Activated CD4-positive, alpha-beta T cell treated with anti-CD3 and anti-CD28 coated beads, Interleukin-2, amount 10 ng/mL, durations not matched to agents 24 days and 14 days (primary cell): ENCODE measurements at regions of chr1 and their contacts with region 1.

Region 1: DNA sequence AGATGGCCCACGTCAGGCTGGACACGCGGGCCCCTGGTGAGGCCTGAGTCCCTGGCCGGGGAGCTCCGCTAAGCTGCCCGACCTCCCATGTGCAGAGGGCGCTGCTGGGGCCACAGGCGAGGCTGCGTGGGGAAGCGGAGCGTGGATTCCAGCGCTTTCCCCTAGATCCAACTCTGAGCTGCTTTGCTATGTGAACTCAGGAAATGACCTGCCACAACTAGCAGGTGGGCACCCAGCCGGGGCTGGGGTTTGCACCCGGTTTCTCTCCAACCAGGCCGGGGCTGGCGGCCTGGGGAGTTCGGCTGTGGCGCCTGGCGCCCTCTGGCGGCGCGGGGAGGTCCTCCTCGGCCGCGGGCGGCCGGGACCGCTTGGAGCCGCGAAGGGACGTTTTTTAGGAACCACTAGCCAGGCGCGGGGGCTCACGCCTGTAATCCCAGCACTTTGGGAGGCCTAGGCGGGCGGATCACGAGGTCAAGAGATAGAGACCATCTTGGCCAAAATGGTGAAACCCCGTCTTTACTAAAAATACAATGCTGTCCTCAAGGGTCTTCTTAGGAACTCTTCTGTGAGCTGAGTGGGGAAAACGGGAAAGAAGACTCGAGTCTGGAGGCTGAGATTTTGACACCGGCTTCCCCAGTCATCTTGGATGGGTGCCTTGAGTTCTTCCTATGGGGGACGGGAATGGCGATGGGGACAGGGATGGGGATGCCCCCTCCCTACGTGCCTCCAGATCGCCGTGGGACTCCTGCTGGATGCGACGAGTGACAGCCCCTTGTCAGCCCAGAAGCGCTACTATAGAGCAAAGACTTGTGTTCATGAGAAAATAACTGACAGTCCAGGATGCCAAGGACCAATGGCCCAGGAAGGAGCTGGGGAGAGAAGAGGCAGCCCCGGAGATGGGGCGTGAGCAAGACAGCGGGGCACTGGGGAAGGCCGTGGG is 12.6 kb downstream of the PYCR2 start:
- DNase-seq: peak; percentile 93
- H3K4me3 Mint-ChIP-seq: no peak overlapping the region
- H3K27ac Mint-ChIP-seq: no peak overlapping the region
- H3K4me1 Mint-ChIP-seq: peaks cover 11% of the 10 kb centered on the region
- H3K27me3 Mint-ChIP-seq: peaks cover 8% of the 10 kb centered on the region

Region 2: DNA sequence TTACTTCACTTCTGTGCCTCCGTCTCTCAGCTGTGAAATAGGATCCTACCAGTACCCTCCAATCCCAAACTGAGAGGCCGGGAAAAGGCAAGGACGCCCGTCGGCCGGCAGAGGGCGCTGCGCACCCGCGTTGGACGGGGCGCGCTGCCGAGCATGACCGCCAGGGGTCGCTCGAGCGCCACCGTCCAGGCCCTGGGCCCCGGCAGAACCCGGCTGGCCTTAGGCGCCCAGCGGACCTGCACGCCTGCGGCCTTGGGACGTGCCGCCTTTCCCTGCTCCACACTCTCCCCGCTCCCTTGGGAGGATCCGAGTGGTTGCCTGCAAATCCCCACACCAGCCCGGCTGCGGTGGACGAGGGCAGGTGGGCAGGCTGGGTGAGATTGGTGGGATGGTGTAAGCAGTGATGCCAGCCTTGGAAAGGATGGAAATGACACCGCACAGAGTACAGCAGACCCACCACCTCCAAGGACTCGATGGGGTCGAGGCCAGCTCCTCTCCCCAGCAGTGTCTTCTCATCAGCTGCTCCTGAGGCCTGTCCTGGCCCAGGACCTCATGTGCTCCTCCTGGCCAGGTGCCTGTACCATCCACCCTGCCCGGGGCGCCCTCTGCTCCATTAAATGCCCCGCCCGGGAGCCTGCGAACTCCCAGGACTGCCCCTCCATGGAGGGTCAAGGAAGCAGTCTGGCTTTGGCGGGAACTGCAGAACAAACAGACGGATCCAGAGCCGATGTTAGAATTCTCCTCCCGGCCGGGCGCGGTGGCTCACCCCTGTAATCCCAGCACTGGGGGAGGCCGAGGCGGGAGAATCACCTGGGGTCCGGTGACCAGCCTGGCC is 436.3 kb before region 1 on chr1:
- intact Hi-C with region 1: loop called (anchors 1 kb)
- DNase-seq: peak; percentile 93
- H3K4me3 Mint-ChIP-seq: no peak overlapping the region
- H3K27ac Mint-ChIP-seq: no peak overlapping the region
- H3K4me1 Mint-ChIP-seq: peaks cover 38% of the 10 kb centered on the region
- H3K27me3 Mint-ChIP-seq: no peaks in the 10 kb centered on the region

Region 3: GRCh38 chr1:225554216-225554812 is 357.1 kb before region 1 on chr1:
- intact Hi-C with region 1: loop called (anchors 5 kb)
- DNase-seq: no peak
- H3K4me3 Mint-ChIP-seq: no peak overlapping the region
- H3K27ac Mint-ChIP-seq: no peak overlapping the region
- H3K4me1 Mint-ChIP-seq: no peaks in the 10 kb centered on the region
- H3K27me3 Mint-ChIP-seq: peaks cover 12% of the 10 kb centered on the region

Region 4: DNA sequence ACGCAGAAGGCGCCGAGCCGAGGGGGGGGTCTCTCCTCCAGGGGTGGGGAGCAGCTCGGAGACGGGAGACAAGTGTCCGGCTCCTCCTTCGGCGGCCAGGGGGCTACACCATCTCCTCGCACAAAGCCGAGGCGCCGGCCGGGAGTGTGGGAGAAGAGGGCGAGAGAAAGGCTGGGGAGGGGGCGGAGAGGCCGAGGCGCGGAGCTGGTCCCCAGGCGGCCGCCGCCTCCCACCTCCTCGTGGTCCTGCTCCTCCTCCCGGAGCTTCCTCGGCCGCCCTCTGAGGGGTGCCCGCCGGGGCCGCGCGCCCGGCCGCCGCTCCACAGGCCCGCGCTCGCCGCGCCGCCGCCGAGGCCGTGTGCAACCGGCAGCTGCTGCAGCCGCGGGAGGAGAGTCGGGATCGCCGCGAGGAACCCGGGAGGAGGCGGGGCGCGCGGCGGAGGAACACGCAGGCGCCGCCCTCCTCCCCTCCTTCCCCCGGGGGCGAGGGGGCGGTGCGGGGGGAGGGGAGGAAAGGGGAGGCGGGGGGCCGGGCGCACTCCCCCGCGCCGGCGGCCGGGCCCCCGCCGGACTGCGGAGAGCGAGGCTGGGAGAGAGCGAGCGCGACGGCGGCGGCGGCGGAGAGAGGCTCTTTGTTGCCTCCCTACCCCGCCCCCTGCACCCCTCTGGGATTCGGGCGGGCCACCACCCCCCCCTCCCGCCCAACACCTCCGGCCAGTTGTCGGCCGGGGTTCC is 258.6 kb before region 1 on chr1 and contains the start of gene ENAH:
- intact Hi-C with region 1: loop called (anchors 10 kb)
- DNase-seq: peak; percentile 79
- H3K4me3 Mint-ChIP-seq: peak within 1 kb of the TSS; percentile 83
- H3K27ac Mint-ChIP-seq: no peak within 1 kb of the TSS
- H3K4me1 Mint-ChIP-seq: peaks cover 10% of the 10 kb centered on the region
- H3K27me3 Mint-ChIP-seq: peaks cover 65% of the 10 kb centered on the region
- total RNA-seq, gene ENAH: 0.33 TPM in 1 of 2 replicates, not detected in the other